Common myeloid progenitor, CD34-positive (primary cell): ENCODE measurements at regions of chr6 and their contacts with region 1.

Region 1: DNA sequence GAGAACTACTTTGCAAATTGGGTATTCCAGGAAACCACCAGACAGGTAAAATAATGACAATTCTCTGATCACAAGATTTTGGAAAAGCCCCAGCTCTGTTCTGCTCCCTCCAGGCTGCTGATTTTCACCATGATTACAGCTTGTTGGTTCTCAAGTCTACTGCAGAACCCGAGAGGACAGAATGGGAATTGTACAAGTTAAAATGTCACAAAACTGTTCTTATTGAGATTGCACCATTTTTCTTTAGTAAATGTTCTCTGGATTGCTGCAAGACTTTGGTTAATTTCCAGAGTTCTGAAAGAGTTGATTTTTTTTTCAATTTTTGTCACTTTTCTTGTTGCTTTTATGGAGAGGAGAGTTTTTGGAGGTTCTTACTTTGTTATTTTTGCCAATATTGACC is 27.1 kb upstream of the HLA-DOA start:
- DNase-seq: no peak
- H3K4me3 ChIP-seq: no peak overlapping the region
- H3K27ac ChIP-seq: no peak overlapping the region
- H3K4me1 ChIP-seq: no peaks in the 10 kb centered on the region
- H3K27me3 ChIP-seq: no peaks in the 10 kb centered on the region

Region 2: DNA sequence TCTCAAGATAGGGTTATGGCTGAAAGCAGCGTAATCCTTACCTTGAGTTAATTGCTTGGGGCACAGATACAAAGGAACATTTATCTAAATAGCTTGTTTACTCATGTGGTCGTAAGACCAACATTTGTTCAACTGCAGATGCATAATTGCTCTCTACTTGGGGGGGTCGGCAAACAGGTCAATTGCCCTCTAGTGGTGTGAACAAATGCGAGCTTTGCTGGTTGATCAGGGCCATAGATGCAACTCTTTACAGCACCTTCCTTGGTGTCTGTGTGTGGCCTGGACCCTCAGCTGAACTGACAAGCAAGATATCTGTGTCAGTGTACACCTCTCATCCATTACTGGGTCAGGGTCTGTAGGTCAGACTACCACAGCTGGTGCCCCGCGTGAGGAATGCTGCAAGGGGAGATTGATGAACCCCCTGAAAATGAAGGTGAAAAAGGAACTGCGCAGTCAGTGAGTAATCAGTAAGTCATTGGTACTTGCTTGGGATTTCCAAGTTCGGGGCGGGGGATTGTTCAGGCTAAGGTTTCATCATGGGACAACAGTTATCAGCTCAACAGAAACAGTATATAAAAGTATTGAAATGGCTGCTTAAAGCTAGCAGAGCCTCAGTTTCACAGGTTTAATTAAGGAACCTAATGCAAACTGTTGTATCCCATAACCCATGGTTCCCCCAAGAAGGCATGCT is 12.9 kb after region 1 on chr6:
- CTCF ChIA-PET with region 1: interaction called, 12 read pairs
- POLR2A ChIA-PET with region 1: no interaction called
- DNase-seq: peak in 1 of 3 donors; percentile 24
- H3K4me3 ChIP-seq: no peak overlapping the region
- H3K27ac ChIP-seq: no peak overlapping the region
- H3K4me1 ChIP-seq: peaks cover 0 to 9% (median 3%) of the 10 kb centered on the region in 4 experiments
- H3K27me3 ChIP-seq: peaks cover 0 to 2% (median 0%) of the 10 kb centered on the region in 5 experiments

Region 3: GRCh38 chr6:33105916-33106871 is 69.7 kb after region 1 on chr6:
- CTCF ChIA-PET with region 1: no interaction called
- POLR2A ChIA-PET with region 1: no interaction called
- DNase-seq: no peak
- H3K4me3 ChIP-seq: no peak overlapping the region
- H3K27ac ChIP-seq: no peak overlapping the region
- H3K4me1 ChIP-seq: no peaks in the 10 kb centered on the region
- H3K27me3 ChIP-seq: peaks cover 0 to 2% (median 0%) of the 10 kb centered on the region in 5 experiments